Heart right ventricle (tissue), 16 donors: ENCODE measurements at regions of chr6 and their contacts with region 1.

Region 1: GRCh38 chr6:140441256-140441655 is 1066.8 kb upstream of the CITED2 start:
- DNase-seq: peak; percentile 32 to 79
- ATAC-seq: peak; percentile 91 to 98 (median 94)
- H3K4me3 ChIP-seq: no peak overlapping the region
- H3K27ac ChIP-seq: peak overlapping the region in 6 of 10 donors; percentile 19 to 62 (median 48)
- H3K4me1 ChIP-seq: peaks cover 0 to 44% (median 16%) of the 10 kb centered on the region in 9 donors
- H3K27me3 ChIP-seq: no peaks in the 10 kb centered on the region
- CTCF ChIP-seq: peak; percentile 22 to 75 (median 61)

Region 2: DNA sequence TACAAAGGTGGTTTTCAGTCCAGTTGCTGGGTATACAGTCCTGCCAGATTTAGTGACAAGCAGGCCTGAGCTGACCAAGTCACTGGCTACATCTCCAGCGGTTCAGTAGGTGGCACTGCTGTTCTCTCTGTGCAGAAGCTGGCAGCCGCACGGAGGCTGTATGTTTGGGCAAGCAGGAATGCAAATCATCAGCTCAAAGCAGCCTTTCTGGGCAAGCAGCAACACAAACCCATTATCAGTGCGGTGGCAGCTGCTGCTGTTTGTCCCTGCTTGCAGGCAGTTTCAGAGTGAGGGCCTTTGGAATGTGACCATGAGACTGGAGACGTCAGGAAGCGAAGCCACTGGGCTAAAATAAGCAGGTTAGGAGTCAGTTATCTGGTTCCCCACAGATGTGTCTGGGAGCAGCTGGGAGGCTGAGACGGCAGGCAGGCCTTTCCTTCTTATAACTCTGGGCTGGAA is 1222.0 kb before region 1 on chr6:
- intact Hi-C with region 1: loop called in 1 of 10 experiments (anchors 5 kb)
- DNase-seq: peak; percentile 79 to 84
- ATAC-seq: peak; percentile 97 to 99 (median 98)
- H3K4me3 ChIP-seq: peak overlapping the region in 1 of 10 donors; percentile 2
- H3K27ac ChIP-seq: peak overlapping the region; percentile 17 to 81 (median 70)
- H3K4me1 ChIP-seq: peaks cover 0 to 18% (median 10%) of the 10 kb centered on the region in 9 donors
- H3K27me3 ChIP-seq: no peaks in the 10 kb centered on the region
- CTCF ChIP-seq: peak; percentile 65 to 95 (median 79)

Region 3: DNA sequence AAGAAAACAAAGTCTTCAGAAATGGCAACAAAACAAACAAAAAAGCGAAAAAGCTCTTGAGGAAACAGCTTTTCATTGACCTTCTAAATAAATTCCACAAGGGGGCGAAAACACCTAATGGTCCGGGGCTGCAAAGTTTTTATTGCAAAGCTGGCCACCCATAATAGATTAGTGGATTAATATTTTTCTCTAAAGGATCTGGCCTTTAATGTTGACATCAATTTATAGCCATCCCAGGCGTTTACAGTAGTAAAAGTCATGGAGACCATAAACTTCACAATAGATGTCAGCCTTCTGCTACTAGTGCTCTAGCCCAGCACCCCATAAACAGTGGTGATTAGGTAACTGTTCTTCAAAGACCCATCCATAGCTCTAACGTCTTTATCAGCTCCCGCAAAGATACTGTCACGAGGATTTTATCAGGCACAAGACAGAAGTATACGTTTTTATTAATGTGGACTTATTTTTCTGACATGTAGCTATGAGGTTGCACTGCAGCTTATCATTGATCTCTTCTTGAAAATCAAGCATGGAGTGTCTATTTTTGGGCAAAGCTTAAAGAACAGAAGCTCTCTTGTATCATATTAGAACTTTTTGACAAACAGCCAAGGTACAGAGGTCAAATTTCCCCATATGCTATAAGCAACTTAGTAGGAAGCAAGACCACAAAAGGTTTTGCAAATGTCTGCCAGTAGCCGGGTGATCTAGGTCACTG is 1071.5 kb before region 1 on chr6:
- intact Hi-C with region 1: loop called in 9 of 10 experiments (anchors 1 to 10 kb)
- DNase-seq: no peak
- ATAC-seq: no peak
- H3K4me3 ChIP-seq: peak overlapping the region in 7 of 10 donors; percentile 0 to 97 (median 79)
- H3K27ac ChIP-seq: peak overlapping the region; percentile 38 to 99 (median 98)
- H3K4me1 ChIP-seq: peaks cover 0 to 48% (median 41%) of the 10 kb centered on the region in 9 donors
- H3K27me3 ChIP-seq: no peaks in the 10 kb centered on the region
- CTCF ChIP-seq: peak; percentile 60 to 83 (median 76)

Region 4: DNA sequence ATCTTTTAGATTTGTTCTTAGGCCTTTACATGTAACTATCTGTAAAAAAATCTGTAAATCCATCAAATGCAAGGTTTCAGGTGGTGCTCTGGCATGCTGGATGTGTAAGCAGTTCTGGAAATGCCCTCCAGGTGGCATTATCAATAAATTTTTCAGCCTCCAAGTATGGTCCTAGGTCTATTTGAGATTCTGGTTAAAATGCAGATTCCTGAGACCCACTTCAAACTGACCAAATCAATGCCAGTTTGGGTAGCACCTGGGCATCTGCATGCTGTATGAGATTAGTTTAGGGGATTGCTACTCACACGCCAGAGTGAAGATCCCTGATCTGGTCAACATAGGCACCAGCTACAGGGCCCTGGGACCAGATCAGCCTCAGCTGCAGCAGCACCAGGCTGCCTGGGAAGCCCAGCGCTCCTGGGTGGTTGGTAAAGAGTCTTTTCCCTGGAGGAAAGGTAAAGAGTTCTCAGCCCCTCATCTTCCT is 559.5 kb before region 1 on chr6:
- intact Hi-C with region 1: loop called in 8 of 10 experiments (anchors 2 to 10 kb)
- DNase-seq: peak in 1 of 2 donors; percentile 15
- ATAC-seq: peak; percentile 30 to 80 (median 70)
- H3K4me3 ChIP-seq: peak overlapping the region in 1 of 10 donors; percentile 14
- H3K27ac ChIP-seq: peak overlapping the region in 8 of 10 donors; percentile 7 to 87 (median 60)
- H3K4me1 ChIP-seq: peaks cover 7 to 47% (median 20%) of the 10 kb centered on the region in 9 donors
- H3K27me3 ChIP-seq: no peaks in the 10 kb centered on the region
- CTCF ChIP-seq: peak; percentile 53 to 71 (median 60)

Region 5: DNA sequence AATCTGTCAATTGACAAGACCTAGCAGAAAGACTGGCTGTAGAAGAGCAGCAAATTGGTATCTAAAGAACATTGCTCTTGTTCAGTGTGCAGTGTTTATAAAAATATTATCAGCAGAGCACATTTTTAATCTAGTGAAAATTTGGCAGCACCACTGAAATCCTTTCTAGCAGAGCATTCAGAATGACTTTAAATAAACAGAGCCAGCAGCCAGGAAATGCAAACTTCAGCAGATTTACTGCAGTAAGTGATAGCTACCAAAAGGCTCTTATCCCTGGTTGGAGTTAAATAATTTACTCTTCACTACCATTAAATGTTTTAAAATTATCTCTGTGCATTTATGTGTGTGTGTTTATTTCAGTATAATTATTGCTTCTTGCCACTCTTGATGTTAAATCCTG is 475.9 kb before region 1 on chr6:
- intact Hi-C with region 1: loop called in 1 of 10 experiments (anchors 10 kb)
- DNase-seq: no peak
- ATAC-seq: peak in 5 of 8 donors; percentile 22 to 51 (median 42)
- H3K4me3 ChIP-seq: no peak overlapping the region
- H3K27ac ChIP-seq: peak overlapping the region in 8 of 10 donors; percentile 2 to 67 (median 42)
- H3K4me1 ChIP-seq: peaks cover 0 to 43% (median 15%) of the 10 kb centered on the region in 9 donors
- H3K27me3 ChIP-seq: no peaks in the 10 kb centered on the region
- CTCF ChIP-seq: no peak

Region 6: DNA sequence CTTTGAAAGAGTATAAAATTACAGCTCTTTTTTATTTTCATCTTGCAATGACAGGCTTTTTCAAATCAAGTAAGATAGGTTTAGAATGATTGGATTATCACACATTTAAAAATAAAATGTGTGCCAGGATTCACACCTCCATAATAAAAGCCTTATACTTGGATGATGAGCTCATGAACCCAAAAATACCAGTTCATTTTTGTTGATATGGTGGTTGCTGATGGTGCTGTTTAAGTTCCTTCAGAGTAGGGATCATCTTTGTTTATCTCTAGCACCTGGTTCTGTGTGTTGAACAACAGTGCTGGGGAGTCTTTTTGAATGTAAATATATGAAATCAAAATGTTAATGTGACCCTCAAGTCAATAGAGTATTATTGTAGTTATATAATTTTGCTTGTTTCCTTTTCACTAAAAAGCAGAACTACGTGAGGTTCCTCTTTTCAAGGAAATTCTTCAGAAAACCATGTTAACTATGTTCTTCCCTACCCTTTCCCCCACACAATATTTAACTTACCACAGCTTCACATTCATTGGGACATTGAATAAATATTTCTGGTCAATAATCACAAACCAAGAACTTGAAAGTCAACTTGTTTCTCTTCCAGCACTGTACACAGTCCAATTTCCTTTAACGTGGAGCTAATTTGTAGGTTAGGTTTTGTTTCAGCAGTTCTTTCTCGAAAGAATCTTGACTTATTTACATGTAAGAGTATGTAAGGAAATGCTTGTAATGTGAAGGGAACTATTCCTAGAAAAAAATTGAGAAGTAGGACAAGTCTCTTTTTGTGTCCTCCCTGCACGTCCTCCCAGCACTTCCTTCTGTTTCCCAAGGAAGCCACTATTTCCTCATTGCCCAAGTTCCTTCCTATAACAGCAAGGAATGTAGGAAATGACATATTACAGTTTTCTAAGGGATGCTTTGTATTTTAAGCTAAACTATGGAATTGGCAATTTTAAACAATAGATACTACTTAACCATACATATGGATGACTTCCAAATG is 120.9 kb before region 1 on chr6:
- intact Hi-C with region 1: no loop called
- DNase-seq: no peak
- ATAC-seq: peak in 6 of 8 donors; percentile 39 to 71 (median 54)
- H3K4me3 ChIP-seq: no peak overlapping the region
- H3K27ac ChIP-seq: peak overlapping the region in 7 of 10 donors; percentile 8 to 73 (median 59)
- H3K4me1 ChIP-seq: peaks cover 0 to 45% (median 31%) of the 10 kb centered on the region in 9 donors
- H3K27me3 ChIP-seq: no peaks in the 10 kb centered on the region
- CTCF ChIP-seq: no peak

Region 7: GRCh38 chr6:140915103-140915502 is 473.8 kb after region 1 on chr6:
- intact Hi-C with region 1: loop called in 2 of 10 experiments (anchors 10 kb)
- DNase-seq: no peak
- ATAC-seq: peak in 3 of 8 donors; percentile 49 to 65 (median 59)
- H3K4me3 ChIP-seq: no peak overlapping the region
- H3K27ac ChIP-seq: peak overlapping the region in 5 of 10 donors; percentile 7 to 46 (median 14)
- H3K4me1 ChIP-seq: peaks cover 2 to 17% (median 12%) of the 10 kb centered on the region in 9 donors
- H3K27me3 ChIP-seq: no peaks in the 10 kb centered on the region
- CTCF ChIP-seq: peak in 3 of 9 donors; percentile 10 to 30 (median 27)

Region 8: DNA sequence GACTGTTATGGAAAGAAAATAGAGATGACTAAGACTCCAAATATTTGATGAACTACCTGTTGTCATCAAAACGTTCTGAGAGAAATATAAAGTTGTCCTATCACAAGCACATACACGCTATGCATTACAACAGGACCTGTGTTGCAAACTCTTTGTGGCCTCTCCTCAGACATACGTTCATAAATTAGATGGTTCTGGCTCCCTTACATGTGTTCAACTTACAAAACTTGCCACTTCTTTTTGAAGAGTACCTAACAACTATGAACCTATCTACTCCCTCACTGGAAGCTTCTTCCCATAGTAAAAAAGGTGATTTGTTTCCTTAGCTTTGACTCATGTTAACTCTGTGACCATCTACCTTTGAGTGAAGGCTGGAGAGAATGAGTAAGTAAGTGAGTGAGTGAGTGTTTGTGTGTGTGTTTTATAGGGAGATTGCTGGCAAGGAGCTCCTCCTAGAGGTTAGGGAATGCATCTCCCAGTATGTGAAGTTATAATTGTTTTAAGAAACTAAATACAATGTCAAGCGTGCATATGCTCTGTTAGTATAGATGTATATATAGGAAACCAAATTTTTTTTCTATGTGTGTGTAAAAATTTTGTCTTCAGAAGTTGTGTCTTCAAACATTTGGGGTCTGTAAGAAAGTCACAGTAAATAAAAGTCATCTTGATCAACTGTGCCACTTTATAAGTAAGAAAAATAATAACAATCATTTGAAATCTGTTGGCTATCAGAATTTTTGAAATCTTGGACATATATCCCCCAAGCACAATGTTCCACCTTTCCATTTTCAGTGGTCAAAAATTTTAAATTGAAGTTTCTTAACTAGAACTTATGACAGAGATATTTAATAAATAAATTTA is 480.3 kb after region 1 on chr6:
- intact Hi-C with region 1: loop called in 2 of 10 experiments (anchors 10 kb)
- DNase-seq: peak in 1 of 2 donors; percentile 22
- ATAC-seq: peak; percentile 46 to 86 (median 70)
- H3K4me3 ChIP-seq: no peak overlapping the region
- H3K27ac ChIP-seq: no peak overlapping the region
- H3K4me1 ChIP-seq: no peaks in the 10 kb centered on the region
- H3K27me3 ChIP-seq: no peaks in the 10 kb centered on the region
- CTCF ChIP-seq: peak; percentile 27 to 73 (median 64)